Activated CD4-positive, alpha-beta T cell treated with anti-CD3 and anti-CD28 coated beads, Interleukin-2, amount 10 ng/mL, durations not matched to agents 7 days and 5 days (primary cell): ENCODE measurements at regions of chr6 and their contacts with region 1.

Region 1: GRCh38 chr6:156820089-156820798 is 43.1 kb downstream of the ARID1B start:
- DNase-seq: no peak
- H3K4me3 Mint-ChIP-seq: no peak overlapping the region
- H3K27ac Mint-ChIP-seq: no peak overlapping the region
- H3K4me1 Mint-ChIP-seq: peaks cover 28% of the 10 kb centered on the region
- H3K27me3 Mint-ChIP-seq: no peaks in the 10 kb centered on the region

Region 2: GRCh38 chr6:156808287-156808686 is 12.0 kb before region 1 on chr6:
- CTCF ChIA-PET with region 1: interaction called, 12 read pairs
- POLR2A ChIA-PET with region 1: no interaction called
- DNase-seq: no peak
- H3K4me3 Mint-ChIP-seq: no peak overlapping the region
- H3K27ac Mint-ChIP-seq: no peak overlapping the region
- H3K4me1 Mint-ChIP-seq: peaks cover 41% of the 10 kb centered on the region
- H3K27me3 Mint-ChIP-seq: no peaks in the 10 kb centered on the region

Region 3: DNA sequence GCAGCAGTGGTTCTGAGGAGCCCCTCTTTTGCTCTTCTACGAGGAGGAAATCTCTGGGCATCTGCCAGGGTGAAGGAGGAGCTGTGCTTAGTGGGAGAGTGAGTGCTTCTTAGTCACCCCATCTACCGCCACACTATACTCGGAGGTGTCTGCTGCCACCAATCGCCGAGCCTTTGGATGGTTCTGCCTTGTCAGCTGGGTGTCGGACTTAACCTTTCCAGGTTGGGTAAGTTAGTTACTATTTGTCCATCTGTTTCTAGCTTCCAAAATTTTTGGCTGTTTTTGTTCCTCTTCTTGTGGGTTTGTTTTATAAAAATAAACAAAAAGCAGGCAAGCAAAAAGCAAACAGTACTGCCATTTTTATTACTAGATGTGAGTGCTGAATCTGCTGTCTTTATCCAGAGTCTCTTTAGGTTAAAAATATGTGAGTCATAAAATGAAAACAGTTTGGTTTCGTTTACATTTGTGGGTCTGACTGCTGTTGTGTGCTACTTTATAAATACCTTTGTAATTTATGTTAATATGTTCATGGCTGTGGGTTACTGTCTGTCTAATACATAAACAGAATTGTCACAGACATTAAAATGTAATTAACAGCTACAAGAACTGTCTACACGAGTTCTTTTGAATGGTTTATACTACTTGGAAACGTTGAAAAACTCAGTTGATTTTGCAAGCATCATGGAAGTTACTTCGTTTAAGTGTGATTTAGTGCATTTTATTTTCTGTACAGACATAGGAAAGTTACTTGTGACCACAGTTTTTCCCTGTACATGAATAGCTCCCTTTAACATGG is 46.2 kb after region 1 on chr6:
- CTCF ChIA-PET with region 1: no interaction called
- POLR2A ChIA-PET with region 1: no interaction called
- DNase-seq: no peak
- H3K4me3 Mint-ChIP-seq: no peak overlapping the region
- H3K27ac Mint-ChIP-seq: no peak overlapping the region
- H3K4me1 Mint-ChIP-seq: peaks cover 50% of the 10 kb centered on the region
- H3K27me3 Mint-ChIP-seq: no peaks in the 10 kb centered on the region